Colonic mucosa (tissue), 4 donors: ENCODE measurements at regions of chr18 and their contacts with region 1.

Region 1: DNA sequence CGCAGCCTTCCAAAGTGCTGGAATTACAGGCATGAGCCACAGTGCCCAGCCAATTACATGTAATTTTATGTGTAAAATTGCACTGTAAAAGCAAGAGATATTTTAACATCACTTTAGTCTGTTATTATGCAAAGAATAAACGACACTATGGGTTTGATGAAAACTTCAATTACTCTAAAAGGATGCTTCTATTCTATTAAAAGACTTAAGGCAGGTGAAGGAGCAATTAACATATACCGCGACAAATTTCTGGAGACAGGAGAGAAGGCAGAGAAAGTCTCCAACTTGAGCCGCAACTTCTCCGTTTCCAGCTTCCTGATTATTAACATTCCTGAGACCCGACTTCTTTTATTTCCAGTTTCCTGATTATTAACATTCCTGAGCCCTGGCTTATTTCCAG is 53.7 kb downstream of the FAM210A start:
- DNase-seq: no peak
- H3K4me3 ChIP-seq: no peak overlapping the region
- H3K27ac ChIP-seq: no peak overlapping the region
- H3K4me1 ChIP-seq: no peaks in the 10 kb centered on the region
- H3K27me3 ChIP-seq: no peaks in the 10 kb centered on the region
- CTCF ChIP-seq: no peak

Region 2: GRCh38 chr18:13011719-13012118 is 660.9 kb before region 1 on chr18:
- intact Hi-C with region 1: loop called (anchors 5 kb)
- DNase-seq: no peak
- H3K4me3 ChIP-seq: no peak overlapping the region
- H3K27ac ChIP-seq: no peak overlapping the region
- H3K4me1 ChIP-seq: no peaks in the 10 kb centered on the region
- H3K27me3 ChIP-seq: no peaks in the 10 kb centered on the region
- CTCF ChIP-seq: no peak